ENCODE measurements at regions of chr14 and their contacts with region 1.

Region 1: GRCh38 chr14:61653507-61653906 is 41.8 kb upstream of the HIF1A start:
- DNase-seq: peak; percentile 78
- H3K4me3 ChIP-seq: no peak overlapping the region
- H3K27ac ChIP-seq: no peak overlapping the region
- H3K4me1 ChIP-seq: peaks cover 12% of the 10 kb centered on the region
- H3K27me3 ChIP-seq: no peaks in the 10 kb centered on the region
- CTCF ChIP-seq: no peak

Region 2: GRCh38 chr14:61561657-61562276 is 91.7 kb before region 1 on chr14:
- CTCF ChIA-PET with region 1: no interaction called
- dilution Hi-C with region 1: no loop called
- in situ Hi-C with region 1: no loop called
- intact Hi-C with region 1: loop called (anchors 5 kb)
- DNase-seq: peak; percentile 91
- H3K4me3 ChIP-seq: no peak overlapping the region
- H3K27ac ChIP-seq: peak overlapping the region; percentile 96
- H3K4me1 ChIP-seq: peaks cover 70% of the 10 kb centered on the region
- H3K27me3 ChIP-seq: no peaks in the 10 kb centered on the region
- CTCF ChIP-seq: no peak

Region 3: DNA sequence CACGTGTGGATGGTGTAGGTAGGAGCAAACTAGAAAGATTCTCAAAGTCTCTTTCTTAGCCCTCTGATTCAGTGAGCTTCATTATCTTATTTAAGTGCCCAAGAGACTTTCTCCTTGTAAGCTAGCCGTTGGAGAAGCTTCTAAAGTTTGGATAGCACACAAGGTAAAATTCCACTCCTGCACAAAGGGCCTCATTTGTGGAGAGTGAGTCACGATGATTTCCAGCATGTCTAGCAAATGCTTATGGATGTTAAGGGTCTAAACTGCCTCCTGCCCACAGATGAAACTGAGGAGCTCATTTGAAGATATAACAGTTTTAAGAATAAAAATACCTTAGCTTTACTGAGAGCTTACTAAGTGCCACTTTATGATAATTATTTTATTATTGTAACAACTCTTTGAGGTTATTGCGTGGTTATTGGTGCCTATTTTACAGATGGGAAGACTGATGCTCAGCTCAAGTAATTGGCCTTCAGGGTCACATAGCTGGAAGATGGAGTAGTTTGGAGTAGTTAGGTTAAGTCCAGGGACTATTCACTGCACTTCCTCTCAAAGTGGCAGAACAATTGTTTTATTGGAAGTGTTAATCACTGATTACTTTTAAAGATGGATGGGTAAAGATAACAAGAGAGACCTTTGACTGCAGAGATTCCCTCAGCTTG is 36.9 kb before region 1 on chr14:
- CTCF ChIA-PET with region 1: no interaction called
- dilution Hi-C with region 1: loop called (anchors 5 kb)
- in situ Hi-C with region 1: no loop called
- intact Hi-C with region 1: no loop called
- DNase-seq: peak; percentile 63
- H3K4me3 ChIP-seq: no peak overlapping the region
- H3K27ac ChIP-seq: no peak overlapping the region
- H3K4me1 ChIP-seq: peaks cover 32% of the 10 kb centered on the region
- H3K27me3 ChIP-seq: no peaks in the 10 kb centered on the region
- CTCF ChIP-seq: no peak

Measured in mammary epithelial cell (primary cell).